Activated CD4-positive, alpha-beta memory T cell treated with anti-CD3 and anti-CD28 coated beads for 36 hours (primary cell): ENCODE measurements at regions of chr19 and their contacts with region 1.

Region 1: GRCh38 chr19:2820112-2820702 is 539 bp downstream of the ZNF554 start:
- DNase-seq: peak; percentile 20
- H3K4me3 Mint-ChIP-seq: peak overlapping the region; percentile 79
- H3K27ac Mint-ChIP-seq: no peak overlapping the region
- H3K4me1 Mint-ChIP-seq: peaks cover 9% of the 10 kb centered on the region
- H3K27me3 Mint-ChIP-seq: no peaks in the 10 kb centered on the region

Region 2: GRCh38 chr19:2795827-2796658 is 24.2 kb before region 1 on chr19:
- CTCF ChIA-PET with region 1: no interaction called
- POLR2A ChIA-PET with region 1: no interaction called
- intact Hi-C with region 1: no loop called
- DNase-seq: no peak
- H3K4me3 Mint-ChIP-seq: no peak overlapping the region
- H3K27ac Mint-ChIP-seq: no peak overlapping the region
- H3K4me1 Mint-ChIP-seq: no peaks in the 10 kb centered on the region
- H3K27me3 Mint-ChIP-seq: no peaks in the 10 kb centered on the region

Region 3: GRCh38 chr19:2840794-2841790 is 20.9 kb after region 1 on chr19 and contains the start of gene ZNF555:
- CTCF ChIA-PET with region 1: interaction called, 3 read pairs
- POLR2A ChIA-PET with region 1: no interaction called
- intact Hi-C with region 1: loop called (anchors 2 kb)
- DNase-seq: peak; percentile 99
- H3K4me3 Mint-ChIP-seq: peak within 1 kb of the TSS; percentile 83
- H3K27ac Mint-ChIP-seq: peak within 1 kb of the TSS; percentile 77
- H3K4me1 Mint-ChIP-seq: peaks cover 9% of the 10 kb centered on the region
- H3K27me3 Mint-ChIP-seq: no peaks in the 10 kb centered on the region
- total RNA-seq, gene ZNF555: 3.6 to 3.8 TPM

Region 4: GRCh38 chr19:2856457-2857050 is 36.3 kb after region 1 on chr19:
- CTCF ChIA-PET with region 1: no interaction called
- POLR2A ChIA-PET with region 1: no interaction called
- intact Hi-C with region 1: no loop called
- DNase-seq: no peak
- H3K4me3 Mint-ChIP-seq: no peak overlapping the region
- H3K27ac Mint-ChIP-seq: peak overlapping the region; percentile 64
- H3K4me1 Mint-ChIP-seq: peaks cover 17% of the 10 kb centered on the region
- H3K27me3 Mint-ChIP-seq: no peaks in the 10 kb centered on the region

Region 5: GRCh38 chr19:2867025-2867991 is 47.1 kb after region 1 on chr19 and contains the start of gene ZNF556:
- CTCF ChIA-PET with region 1: no interaction called
- POLR2A ChIA-PET with region 1: no interaction called
- intact Hi-C with region 1: loop called (anchors 10 kb)
- DNase-seq: peak; percentile 30
- H3K4me3 Mint-ChIP-seq: no peak within 1 kb of the TSS
- H3K27ac Mint-ChIP-seq: no peak within 1 kb of the TSS
- H3K4me1 Mint-ChIP-seq: no peaks in the 10 kb centered on the region
- H3K27me3 Mint-ChIP-seq: peaks cover 5% of the 10 kb centered on the region
- total RNA-seq, gene ZNF556: not detected

Region 6: DNA sequence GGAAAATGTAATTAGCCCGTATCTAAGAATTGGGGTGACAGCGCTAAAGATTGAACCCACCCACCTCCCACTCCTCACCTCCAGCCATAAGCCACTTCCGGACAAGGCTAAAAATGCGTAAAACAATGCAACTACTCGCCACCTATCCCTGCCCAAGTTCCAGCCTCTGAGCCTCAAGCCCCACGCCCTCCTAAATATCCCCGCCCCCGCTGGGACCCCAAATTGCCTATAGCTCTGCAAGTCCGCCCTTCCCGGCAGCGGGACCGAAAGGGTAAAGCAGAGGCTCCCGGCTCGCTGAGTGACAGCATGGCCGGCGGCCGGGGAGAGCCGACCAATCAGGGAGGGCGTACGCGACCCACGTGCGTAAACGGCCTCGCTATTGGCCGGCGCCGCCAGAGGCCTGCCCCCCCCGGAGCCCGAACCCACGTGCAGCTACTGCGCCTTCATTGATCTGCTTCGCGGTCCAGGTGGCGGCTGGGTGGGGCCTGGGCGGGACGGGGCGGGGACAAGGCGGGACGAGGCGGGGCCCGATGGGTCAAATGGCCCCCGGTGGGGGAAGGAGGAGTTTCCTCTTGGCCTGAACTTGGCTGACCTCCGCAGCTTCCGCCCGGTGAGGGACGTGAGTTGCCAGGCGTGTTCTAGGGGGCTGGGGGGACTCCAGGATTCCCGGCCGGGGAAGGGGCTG is 156.9 kb after region 1 on chr19 and contains the start of gene TLE6:
- CTCF ChIA-PET with region 1: no interaction called
- POLR2A ChIA-PET with region 1: no interaction called
- intact Hi-C with region 1: loop called (anchors 1 kb)
- DNase-seq: peak; percentile 97
- H3K4me3 Mint-ChIP-seq: peak within 1 kb of the TSS; percentile 89
- H3K27ac Mint-ChIP-seq: peak within 1 kb of the TSS; percentile 72
- H3K4me1 Mint-ChIP-seq: peaks cover 13% of the 10 kb centered on the region
- H3K27me3 Mint-ChIP-seq: peaks cover 7% of the 10 kb centered on the region
- total RNA-seq, gene TLE6: 2.5 to 2.6 TPM

Region 7: GRCh38 chr19:3029065-3029923 is 209.1 kb after region 1 on chr19 and contains the start of gene TLE2:
- CTCF ChIA-PET with region 1: no interaction called
- POLR2A ChIA-PET with region 1: no interaction called
- intact Hi-C with region 1: no loop called
- DNase-seq: no peak
- H3K4me3 Mint-ChIP-seq: peak within 1 kb of the TSS; percentile 58
- H3K27ac Mint-ChIP-seq: no peak within 1 kb of the TSS
- H3K4me1 Mint-ChIP-seq: peaks cover 17% of the 10 kb centered on the region
- H3K27me3 Mint-ChIP-seq: peaks cover 11% of the 10 kb centered on the region
- total RNA-seq, gene TLE2: 8.5 to 9.9 TPM